GM10248 (cell line): ENCODE measurements at regions of chr20 and their contacts with region 1.

Region 1: DNA sequence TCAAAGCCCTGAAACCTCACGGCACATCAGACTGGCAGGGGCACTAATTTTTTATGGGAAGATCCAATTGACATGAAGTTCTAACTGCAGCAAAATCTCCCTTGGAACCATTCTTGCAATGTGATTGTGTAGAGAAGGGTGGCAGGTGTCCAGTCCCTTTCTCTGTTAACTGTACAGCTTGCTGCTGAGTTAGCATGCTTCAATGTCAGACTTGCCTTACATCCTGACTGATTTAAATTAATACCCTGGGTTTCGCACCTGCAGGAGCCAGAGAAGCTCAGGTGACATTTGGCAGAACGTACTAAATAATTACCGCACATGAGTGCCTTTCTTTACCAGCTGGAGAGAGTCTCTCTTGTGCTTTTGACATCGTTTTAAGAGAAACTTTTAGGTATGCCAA is 123.0 kb downstream of the DOK5 start:
- DNase-seq: no peak
- CTCF ChIP-seq: no peak

Region 2: GRCh38 chr20:54587408-54587807 is 10.9 kb before region 1 on chr20:
- CTCF ChIA-PET with region 1: interaction called, 11 read pairs
- POLR2A ChIA-PET with region 1: no interaction called
- DNase-seq: no peak
- CTCF ChIP-seq: no peak

Region 3: DNA sequence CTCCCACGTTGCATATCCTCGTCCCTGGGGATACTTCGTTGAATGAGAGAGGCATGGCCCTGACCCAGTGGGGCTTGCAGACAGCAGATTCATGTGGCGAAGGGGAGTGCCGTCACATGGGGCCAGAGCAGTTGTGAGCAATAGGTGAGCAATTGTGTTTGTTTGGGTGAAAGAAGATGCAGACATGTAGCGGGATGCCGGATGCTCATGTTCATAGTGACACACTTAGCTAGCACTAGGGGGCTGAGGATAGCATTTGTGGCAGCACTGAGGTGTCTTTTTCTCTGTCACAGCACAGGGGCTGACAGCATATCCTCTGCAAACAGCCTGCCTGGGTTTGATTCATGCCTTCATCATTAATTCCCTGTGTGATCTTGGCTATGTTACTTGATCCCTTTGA is 230.9 kb after region 1 on chr20:
- CTCF ChIA-PET with region 1: no interaction called
- POLR2A ChIA-PET with region 1: no interaction called
- DNase-seq: no peak
- CTCF ChIP-seq: no peak